ENCODE measurements at regions of chr1 and their contacts with region 1.

Region 1: DNA sequence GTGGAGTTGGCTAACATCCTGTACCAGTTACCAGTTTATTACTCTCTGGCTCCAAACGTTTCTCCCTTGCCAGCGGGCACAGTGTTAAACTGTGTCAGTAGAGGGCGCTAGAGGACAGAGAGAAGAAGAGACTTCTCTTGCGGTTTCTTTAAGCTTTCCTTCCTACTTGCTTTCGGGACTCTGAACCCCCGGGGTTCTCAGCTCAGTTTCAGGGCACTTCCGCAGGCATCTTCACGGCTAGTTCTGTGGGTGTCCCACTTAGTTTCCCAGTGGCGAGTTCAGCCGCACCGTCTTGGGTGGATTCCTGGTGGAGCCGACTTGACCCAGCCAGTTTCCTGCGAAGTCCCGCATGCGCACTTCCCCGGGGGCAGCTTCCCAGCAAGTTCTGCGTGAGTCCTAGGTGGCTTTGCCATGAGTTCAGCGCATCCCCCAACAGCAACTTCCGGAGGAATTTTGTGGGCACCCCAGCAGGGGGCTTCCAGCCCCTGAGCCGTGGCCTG is 37.9 kb upstream of the BTG2 start:
- DNase-seq: no peak
- ATAC-seq: peak; percentile 70
- H3K4me3 ChIP-seq: peak overlapping the region; percentile 61; the same call in 1 of the 2 replicates
- H3K27ac ChIP-seq: peak overlapping the region; percentile 47
- H3K4me1 ChIP-seq: peaks cover 7% of the 10 kb centered on the region
- H3K27me3 ChIP-seq: no peaks in the 10 kb centered on the region; a peak in 1 of 4 replicates
- CTCF ChIP-seq: peak; percentile 89 to 97 (median 91)
- EP300 ChIP-seq: no peak
- POLR2A ChIP-seq: no peak
- RAD21 ChIP-seq: peak; percentile 95

Region 2: DNA sequence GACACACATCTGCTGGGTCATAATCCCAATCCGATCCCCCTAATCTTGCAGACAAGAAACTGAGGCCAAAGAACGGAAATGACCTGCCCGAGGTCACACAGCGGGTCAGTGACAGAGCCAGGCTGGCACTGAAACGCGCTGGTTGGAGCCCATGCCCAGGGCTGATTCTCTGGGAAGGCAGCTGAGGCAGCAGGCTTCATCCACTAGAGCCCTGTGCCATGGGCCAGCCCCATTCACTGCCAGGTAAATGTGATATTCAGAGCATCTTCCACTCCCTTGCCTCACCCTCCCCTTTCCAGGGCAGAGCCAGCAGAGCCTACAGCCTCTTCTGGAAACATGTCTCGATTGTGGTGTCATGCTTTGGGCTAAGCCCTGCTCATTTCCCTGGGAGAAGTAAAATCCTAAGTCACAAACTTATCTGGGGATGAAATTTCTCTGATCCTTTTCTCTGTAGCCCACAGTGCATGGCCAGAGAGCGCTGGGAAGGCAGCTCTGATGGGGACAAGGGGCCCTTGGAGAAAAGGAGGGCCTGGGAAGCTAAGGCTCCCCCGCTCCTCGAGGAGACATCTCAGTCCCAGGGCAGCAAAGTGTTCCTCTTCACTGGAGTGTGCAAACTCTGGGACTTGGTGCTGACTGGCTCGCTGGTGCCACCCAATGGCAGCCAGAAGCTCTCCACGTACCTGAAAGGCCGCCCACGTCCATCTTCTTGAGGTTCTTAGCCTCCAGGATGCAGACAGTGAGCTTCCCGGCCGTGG is 667.5 kb before region 1 on chr1:
- CTCF ChIA-PET with region 1: no interaction called
- POLR2A ChIA-PET with region 1: no interaction called
- RAD21 ChIA-PET with region 1: no interaction called
- SMC1A ChIA-PET with region 1: no interaction called
- in situ Hi-C with region 1: no loop called
- intact Hi-C with region 1: no loop called
- DNase-seq: no peak
- ATAC-seq: peak; percentile 95
- H3K4me3 ChIP-seq: no peak overlapping the region
- H3K27ac ChIP-seq: no peak overlapping the region
- H3K4me1 ChIP-seq: peaks cover 3% of the 10 kb centered on the region
- H3K27me3 ChIP-seq: no peaks in the 10 kb centered on the region; a peak in 3 of 4 replicates
- CTCF ChIP-seq: peak; percentile 79 to 86 (median 81)
- EP300 ChIP-seq: no peak
- POLR2A ChIP-seq: no peak
- RAD21 ChIP-seq: peak; percentile 79

Region 3: DNA sequence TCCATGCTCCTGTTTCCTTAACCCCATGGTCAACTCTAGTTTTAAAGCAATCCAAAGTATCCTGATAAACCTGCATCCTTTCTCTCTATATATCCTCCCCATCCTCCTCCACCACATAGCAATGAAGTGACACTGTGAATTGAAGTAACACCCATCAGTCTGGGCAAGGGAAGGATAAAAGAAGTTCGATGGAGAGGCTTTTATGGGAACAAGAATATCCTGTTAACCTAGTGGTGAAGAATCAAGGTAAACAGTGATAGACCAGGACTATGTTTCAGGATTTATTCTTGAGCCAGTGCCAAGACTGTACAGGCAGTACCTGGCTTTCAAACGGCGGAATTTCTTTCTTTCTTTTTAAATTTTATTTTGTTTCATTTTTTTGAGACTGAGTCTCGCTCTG is 396.0 kb before region 1 on chr1:
- CTCF ChIA-PET with region 1: no interaction called
- POLR2A ChIA-PET with region 1: no interaction called
- RAD21 ChIA-PET with region 1: no interaction called
- SMC1A ChIA-PET with region 1: no interaction called
- in situ Hi-C with region 1: no loop called
- intact Hi-C with region 1: no loop called
- DNase-seq: no peak
- ATAC-seq: no peak
- H3K4me3 ChIP-seq: no peak overlapping the region
- H3K27ac ChIP-seq: no peak overlapping the region
- H3K4me1 ChIP-seq: no peaks in the 10 kb centered on the region
- H3K27me3 ChIP-seq: no peaks in the 10 kb centered on the region
- CTCF ChIP-seq: no peak
- EP300 ChIP-seq: no peak
- POLR2A ChIP-seq: no peak
- RAD21 ChIP-seq: no peak

Region 4: GRCh38 chr1:203038891-203039608 is 228.3 kb before region 1 on chr1:
- CTCF ChIA-PET with region 1: interaction called, 127 read pairs
- POLR2A ChIA-PET with region 1: interaction called, 3 read pairs
- RAD21 ChIA-PET with region 1: interaction called, 20 read pairs
- SMC1A ChIA-PET with region 1: interaction called, 20 read pairs
- in situ Hi-C with region 1: no loop called
- intact Hi-C with region 1: loop called (anchors 2 kb)
- DNase-seq: no peak
- ATAC-seq: peak; percentile 91
- H3K4me3 ChIP-seq: no peak overlapping the region
- H3K27ac ChIP-seq: no peak overlapping the region
- H3K4me1 ChIP-seq: peaks cover 11% of the 10 kb centered on the region
- H3K27me3 ChIP-seq: no peaks in the 10 kb centered on the region
- CTCF ChIP-seq: peak; percentile 88 to 91 (median 89)
- EP300 ChIP-seq: no peak
- POLR2A ChIP-seq: no peak
- RAD21 ChIP-seq: peak; percentile 79

Region 5: DNA sequence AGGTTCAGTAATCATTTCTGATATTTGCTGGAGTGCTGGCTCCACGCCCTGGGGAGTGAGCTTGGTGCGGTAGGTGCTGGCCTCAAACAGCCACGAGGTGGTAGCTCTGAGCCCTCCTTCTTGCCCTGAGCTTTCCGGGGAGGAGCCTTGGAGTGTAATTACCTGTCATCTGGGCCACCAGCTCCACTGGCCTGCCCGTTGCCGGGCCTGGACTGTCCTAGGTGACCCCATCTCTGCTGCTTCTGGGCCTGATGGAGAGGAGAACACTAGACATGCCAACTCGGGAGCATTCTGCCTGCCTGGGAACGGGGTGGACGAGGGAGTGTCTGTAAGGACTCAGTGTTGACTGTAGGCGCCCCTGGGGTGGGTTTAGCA is 100.8 kb before region 1 on chr1:
- CTCF ChIA-PET with region 1: interaction called, 41 read pairs
- POLR2A ChIA-PET with region 1: no interaction called
- RAD21 ChIA-PET with region 1: interaction called, 10 read pairs
- SMC1A ChIA-PET with region 1: interaction called, 8 read pairs
- in situ Hi-C with region 1: no loop called
- intact Hi-C with region 1: loop called (anchors 5 kb)
- DNase-seq: no peak
- ATAC-seq: peak; percentile 95
- H3K4me3 ChIP-seq: no peak overlapping the region
- H3K27ac ChIP-seq: no peak overlapping the region
- H3K4me1 ChIP-seq: no peaks in the 10 kb centered on the region
- H3K27me3 ChIP-seq: peaks cover 0 to 3% of the 10 kb centered on the region in 2 experiments; a peak in 3 of 4 replicates
- CTCF ChIP-seq: peak; percentile 24 to 60 (median 48); a peak in 3 of 6 replicates
- EP300 ChIP-seq: no peak
- POLR2A ChIP-seq: no peak
- RAD21 ChIP-seq: peak; percentile 30; the same call in 1 of the 2 replicates

Region 6: DNA sequence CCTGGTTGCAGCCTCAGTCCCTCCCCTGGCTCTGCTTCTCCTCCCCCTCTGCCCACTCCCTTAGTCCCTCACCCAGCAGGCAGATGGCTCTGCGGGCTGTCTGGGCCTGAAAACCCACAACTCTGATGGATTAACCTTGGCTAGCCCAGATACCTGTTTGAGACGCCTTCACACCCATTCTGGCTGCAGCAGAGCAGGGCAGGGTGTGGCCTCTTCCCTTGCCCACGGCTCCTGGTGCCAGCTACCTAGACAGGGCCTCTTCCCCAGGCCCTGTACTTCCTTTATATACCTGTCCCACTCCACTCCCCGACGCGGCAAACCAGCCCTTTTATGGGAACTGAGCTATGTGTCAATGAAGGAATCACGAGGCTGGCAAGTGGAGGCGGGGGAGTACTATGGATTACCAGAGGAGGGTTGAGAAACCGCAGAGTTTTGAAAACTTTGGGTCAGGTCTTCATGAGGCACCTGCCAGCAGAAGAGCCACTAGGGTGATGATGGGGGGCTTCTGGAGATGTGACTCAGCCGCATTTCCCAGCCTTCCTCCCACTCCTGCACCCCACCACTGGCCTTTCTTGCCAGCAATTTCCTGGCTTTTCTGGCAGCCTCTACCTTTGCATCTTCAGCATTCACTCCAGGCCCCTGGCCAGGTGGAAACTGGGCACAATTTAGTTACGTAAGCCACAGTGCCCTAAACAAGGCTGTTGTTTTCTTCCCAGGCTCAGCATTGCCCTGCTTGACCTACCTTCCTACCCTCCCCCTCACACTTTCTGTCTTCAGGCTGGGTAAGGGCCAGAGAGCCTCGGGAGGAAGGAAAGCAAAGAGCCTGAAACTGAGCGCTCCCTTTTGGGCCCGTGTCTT is 80.7 kb before region 1 on chr1 and contains the start of gene CHI3L1:
- CTCF ChIA-PET with region 1: no interaction called
- POLR2A ChIA-PET with region 1: no interaction called
- RAD21 ChIA-PET with region 1: no interaction called
- SMC1A ChIA-PET with region 1: no interaction called
- in situ Hi-C with region 1: no loop called
- intact Hi-C with region 1: no loop called
- DNase-seq: no peak
- ATAC-seq: no peak
- H3K4me3 ChIP-seq: no peak within 1 kb of the TSS
- H3K27ac ChIP-seq: no peak within 1 kb of the TSS
- H3K4me1 ChIP-seq: no peaks in the 10 kb centered on the region
- H3K27me3 ChIP-seq: no peaks in the 10 kb centered on the region; a peak in 1 of 4 replicates
- CTCF ChIP-seq: no peak
- EP300 ChIP-seq: no peak
- POLR2A ChIP-seq: no peak
- RAD21 ChIP-seq: no peak
- polyA plus RNA-seq, gene CHI3L1: 0.10 to 0.26 TPM

Region 7: DNA sequence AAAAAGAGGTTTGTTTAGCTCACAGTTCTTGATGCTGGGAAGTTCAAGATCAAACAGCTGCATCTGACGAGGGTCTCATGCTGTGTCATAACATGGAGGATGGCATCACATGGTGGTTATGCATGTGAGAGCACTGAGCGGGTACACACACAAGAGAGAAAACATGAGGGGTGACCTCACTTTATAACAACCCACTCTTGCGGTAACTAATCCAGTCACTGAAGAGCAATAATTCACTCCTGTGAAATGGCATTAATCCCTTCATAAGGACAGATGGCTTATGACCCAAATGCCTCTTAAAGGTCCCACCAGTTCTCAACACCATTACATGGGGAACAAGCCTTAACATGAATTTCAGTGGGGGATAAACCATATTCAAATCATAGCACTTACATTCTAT is 14.7 kb before region 1 on chr1:
- CTCF ChIA-PET with region 1: interaction called, 15 read pairs
- POLR2A ChIA-PET with region 1: no interaction called
- RAD21 ChIA-PET with region 1: interaction called, 4 read pairs
- SMC1A ChIA-PET with region 1: interaction called, 11 read pairs
- in situ Hi-C with region 1: no loop called
- intact Hi-C with region 1: no loop called
- DNase-seq: no peak
- ATAC-seq: peak; percentile 15; the same call in 2 of the 3 replicates
- H3K4me3 ChIP-seq: no peak overlapping the region
- H3K27ac ChIP-seq: no peak overlapping the region
- H3K4me1 ChIP-seq: no peaks in the 10 kb centered on the region
- H3K27me3 ChIP-seq: no peaks in the 10 kb centered on the region
- CTCF ChIP-seq: no peak
- EP300 ChIP-seq: no peak
- POLR2A ChIP-seq: no peak
- RAD21 ChIP-seq: no peak

Region 8: GRCh38 chr1:203311368-203312301 is 44.2 kb after region 1 on chr1:
- CTCF ChIA-PET with region 1: interaction called, 70 read pairs
- POLR2A ChIA-PET with region 1: interaction called, 5 read pairs
- RAD21 ChIA-PET with region 1: interaction called, 470 read pairs
- SMC1A ChIA-PET with region 1: interaction called, 183 read pairs
- in situ Hi-C with region 1: no loop called
- intact Hi-C with region 1: no loop called
- DNase-seq: no peak
- ATAC-seq: peak; percentile 22
- H3K4me3 ChIP-seq: no peak overlapping the region
- H3K27ac ChIP-seq: 0 out of 2 replicates have a peak overlapping the region, but pooled peaks have one; percentile 10
- H3K4me1 ChIP-seq: peaks cover 19% of the 10 kb centered on the region
- H3K27me3 ChIP-seq: no peaks in the 10 kb centered on the region
- CTCF ChIP-seq: no peak
- EP300 ChIP-seq: no peak
- POLR2A ChIP-seq: no peak
- RAD21 ChIP-seq: no peak

Region 9: DNA sequence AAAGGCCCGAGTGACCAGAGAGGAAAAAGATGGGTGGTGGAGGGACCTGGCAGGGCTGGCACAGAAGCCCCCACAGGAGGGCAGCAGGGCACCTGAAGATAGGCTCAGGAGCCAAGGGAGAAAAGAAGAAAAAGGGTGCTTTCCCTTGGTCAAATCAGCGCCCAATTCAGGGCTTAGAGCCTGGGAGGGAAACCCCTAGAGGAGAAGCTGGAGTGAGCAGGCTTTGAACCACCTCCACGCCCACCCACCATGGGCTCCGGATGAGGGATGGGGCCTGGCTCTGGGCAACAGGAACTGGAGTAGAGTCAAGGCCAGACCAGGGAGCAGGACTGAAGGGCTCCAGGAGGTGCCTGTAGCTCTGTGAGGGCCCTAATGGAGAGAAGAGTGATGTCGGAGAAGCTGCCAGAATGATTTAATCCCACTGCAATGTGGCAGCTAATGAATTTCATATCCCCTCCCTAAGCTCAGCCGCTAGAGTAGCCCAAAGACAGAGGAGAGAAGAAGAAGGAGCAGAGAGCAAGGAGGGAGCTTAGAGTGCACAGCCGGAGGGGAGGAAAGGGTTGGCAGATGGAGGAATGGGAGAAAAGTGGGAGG is 196.2 kb after region 1 on chr1:
- CTCF ChIA-PET with region 1: interaction called, 11 read pairs
- POLR2A ChIA-PET with region 1: no interaction called
- RAD21 ChIA-PET with region 1: interaction called, 4 read pairs
- SMC1A ChIA-PET with region 1: interaction called, 4 read pairs
- in situ Hi-C with region 1: no loop called
- intact Hi-C with region 1: no loop called
- DNase-seq: no peak
- ATAC-seq: peak; percentile 59
- H3K4me3 ChIP-seq: no peak overlapping the region
- H3K27ac ChIP-seq: no peak overlapping the region
- H3K4me1 ChIP-seq: no peaks in the 10 kb centered on the region
- H3K27me3 ChIP-seq: no peaks in the 10 kb centered on the region; a peak in 2 of 4 replicates
- CTCF ChIP-seq: peak; percentile 5 to 41 (median 13); a peak in 3 of 6 replicates
- EP300 ChIP-seq: no peak
- POLR2A ChIP-seq: no peak
- RAD21 ChIP-seq: no peak

Region 10: DNA sequence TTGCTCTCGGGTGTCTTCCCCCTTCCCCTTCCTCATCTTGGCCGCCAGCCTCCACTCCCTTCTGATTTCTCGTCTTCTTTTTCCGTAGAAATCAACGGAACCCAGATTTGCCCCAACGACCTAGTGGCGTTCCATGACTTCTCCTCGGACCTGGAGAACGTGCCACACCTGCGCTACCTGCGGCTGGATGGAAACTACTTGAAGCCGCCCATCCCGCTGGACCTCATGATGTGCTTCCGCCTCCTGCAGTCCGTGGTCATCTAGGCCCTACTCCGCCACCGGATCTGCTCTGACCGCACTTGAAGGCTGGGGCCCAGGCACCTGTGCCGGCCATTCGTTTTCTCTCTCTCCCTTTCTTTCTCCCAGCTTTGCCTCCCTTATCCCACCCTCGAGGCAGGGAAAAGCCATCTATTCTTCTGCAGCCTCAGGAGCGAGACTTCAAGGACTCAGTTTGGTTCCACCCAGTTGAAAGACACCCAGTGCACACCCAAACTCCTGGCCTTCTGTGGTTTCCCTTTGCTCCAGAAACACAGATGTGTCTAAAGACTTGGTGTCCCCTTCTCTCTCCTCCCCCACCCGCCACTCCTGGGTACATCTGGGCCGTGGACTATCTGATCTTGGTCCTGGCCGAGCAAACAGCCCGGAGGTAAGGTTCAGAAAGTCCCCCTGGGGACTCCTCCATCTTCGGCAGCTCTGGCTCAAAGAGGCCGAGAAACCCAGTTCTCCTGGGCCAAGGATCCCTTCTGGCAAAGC is 219.4 kb after region 1 on chr1:
- CTCF ChIA-PET with region 1: interaction called, 81 read pairs
- POLR2A ChIA-PET with region 1: no interaction called
- RAD21 ChIA-PET with region 1: interaction called, 17 read pairs
- SMC1A ChIA-PET with region 1: interaction called, 20 read pairs
- in situ Hi-C with region 1: loop called (anchors 5 kb)
- intact Hi-C with region 1: loop called (anchors 1 kb)
- DNase-seq: no peak
- ATAC-seq: peak; percentile 7; the same call in 2 of the 3 replicates
- H3K4me3 ChIP-seq: no peak overlapping the region
- H3K27ac ChIP-seq: no peak overlapping the region
- H3K4me1 ChIP-seq: 0 out of 2 replicates have a peak, but pooled peaks cover 3% of the 10 kb centered on the region
- H3K27me3 ChIP-seq: peaks cover 0 to 10% of the 10 kb centered on the region in 2 experiments; a peak in 2 of 4 replicates
- CTCF ChIP-seq: no peak
- EP300 ChIP-seq: no peak
- POLR2A ChIP-seq: no peak
- RAD21 ChIP-seq: no peak